Caco-2 (cell line): ENCODE measurements at regions of chr10 and their contacts with region 1.

Region 1: DNA sequence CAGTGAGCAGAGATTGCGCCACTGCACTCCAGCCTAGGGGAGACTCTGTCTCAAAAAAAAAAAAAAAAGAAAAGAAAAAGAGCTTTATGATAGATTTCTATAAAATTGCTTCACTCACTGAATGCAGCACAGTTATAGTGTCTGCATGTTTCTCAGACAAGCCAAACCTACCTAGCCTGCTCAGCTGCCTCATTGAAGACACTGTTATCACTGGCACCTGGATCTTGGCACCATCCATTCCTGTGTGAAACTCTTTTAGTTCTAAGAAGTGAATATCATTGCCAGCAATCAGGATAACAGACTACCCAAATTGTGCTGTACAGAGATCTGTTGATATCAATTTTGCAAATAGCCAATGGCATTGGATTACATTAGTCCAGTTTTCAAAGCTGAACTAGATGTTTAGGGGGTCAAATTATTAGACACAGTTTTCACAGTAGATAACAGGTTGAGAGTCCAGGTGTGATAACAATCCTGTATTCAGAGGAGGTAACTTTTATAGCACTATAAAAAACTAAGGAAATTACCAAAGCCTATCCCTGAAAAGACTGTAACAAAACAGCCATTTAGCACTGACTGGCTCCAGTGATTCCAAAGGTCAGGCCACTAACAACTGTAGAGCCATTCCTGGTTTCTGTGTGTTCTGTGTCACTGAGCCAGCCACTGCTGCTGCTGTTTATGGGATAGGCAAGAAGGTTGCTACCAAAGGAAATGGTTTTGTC is 17.1 kb downstream of the PDSS1 start:
- DNase-seq: peak; percentile 59 to 81
- H3K4me3 ChIP-seq: no peak overlapping the region
- H3K4me3 Mint-ChIP-seq: no peak overlapping the region
- H3K27ac Mint-ChIP-seq: peak overlapping the region; percentile 56
- H3K4me1 ChIP-seq: peaks cover 15% of the 10 kb centered on the region
- H3K4me1 Mint-ChIP-seq: peaks cover 27% of the 10 kb centered on the region
- H3K27me3 ChIP-seq: no peaks in the 10 kb centered on the region
- H3K27me3 Mint-ChIP-seq: no peaks in the 10 kb centered on the region
- CTCF ChIP-seq: no peak

Region 2: GRCh38 chr10:26697163-26697921 is 17.2 kb before region 1 on chr10 and contains the start of gene PDSS1:
- CTCF ChIA-PET with region 1: interaction called, 3 read pairs
- POLR2A ChIA-PET with region 1: no interaction called
- intact Hi-C with region 1: loop called (anchors 2 kb)
- DNase-seq: peak; percentile 79 to 84
- H3K4me3 ChIP-seq: peak within 1 kb of the TSS; percentile 94
- H3K4me3 Mint-ChIP-seq: peak within 1 kb of the TSS; percentile 99
- H3K27ac Mint-ChIP-seq: peak within 1 kb of the TSS; percentile 94
- H3K4me1 ChIP-seq: peaks cover 17% of the 10 kb centered on the region
- H3K4me1 Mint-ChIP-seq: peaks cover 18% of the 10 kb centered on the region
- H3K27me3 ChIP-seq: no peaks in the 10 kb centered on the region
- H3K27me3 Mint-ChIP-seq: no peaks in the 10 kb centered on the region
- CTCF ChIP-seq: no peak
- total RNA-seq, gene PDSS1: 22.4 and 24.9 TPM in 2 replicates

Region 3: DNA sequence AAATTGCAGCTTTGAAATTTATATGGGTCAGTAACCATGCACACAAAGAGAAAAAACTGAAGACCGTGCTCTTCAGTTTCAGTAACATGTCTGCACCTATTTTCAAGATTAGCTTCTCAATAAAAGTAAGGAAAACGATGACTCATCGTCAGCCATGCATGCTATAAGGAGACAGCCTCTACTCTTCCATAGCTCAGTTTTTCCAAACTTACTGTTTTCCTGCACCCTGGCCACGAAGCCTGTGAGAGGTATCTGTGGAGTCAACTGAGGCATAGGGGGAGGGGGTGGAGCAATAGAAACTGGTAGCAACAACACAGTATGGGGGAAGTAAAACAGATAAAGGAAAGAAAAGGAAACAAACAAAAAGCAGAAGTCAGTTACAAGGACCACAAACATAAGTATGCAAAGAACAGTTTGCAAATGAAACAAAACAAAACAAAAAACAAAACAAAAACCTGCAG is 40.9 kb after region 1 on chr10:
- CTCF ChIA-PET with region 1: no interaction called
- POLR2A ChIA-PET with region 1: no interaction called
- intact Hi-C with region 1: no loop called
- DNase-seq: no peak
- H3K4me3 ChIP-seq: no peak overlapping the region
- H3K4me3 Mint-ChIP-seq: no peak overlapping the region
- H3K27ac Mint-ChIP-seq: peak overlapping the region; percentile 1
- H3K4me1 ChIP-seq: peaks cover 4% of the 10 kb centered on the region; the same call in 1 of the 2 replicates
- H3K4me1 Mint-ChIP-seq: peaks cover 12% of the 10 kb centered on the region
- H3K27me3 ChIP-seq: no peaks in the 10 kb centered on the region
- H3K27me3 Mint-ChIP-seq: no peaks in the 10 kb centered on the region
- CTCF ChIP-seq: no peak